Activated naive CD4-positive, alpha-beta T cell treated with anti-CD3 and anti-CD28 coated beads for 36 hours (primary cell): ENCODE measurements at regions of chr3 and their contacts with region 1.

Region 1: GRCh38 chr3:107271787-107272387 is 105.4 kb upstream of the CCDC54 start:
- DNase-seq: no peak
- H3K4me3 Mint-ChIP-seq: no peak overlapping the region
- H3K27ac Mint-ChIP-seq: no peak overlapping the region
- H3K4me1 Mint-ChIP-seq: no peaks in the 10 kb centered on the region
- H3K27me3 Mint-ChIP-seq: peaks cover 8% of the 10 kb centered on the region

Region 2: DNA sequence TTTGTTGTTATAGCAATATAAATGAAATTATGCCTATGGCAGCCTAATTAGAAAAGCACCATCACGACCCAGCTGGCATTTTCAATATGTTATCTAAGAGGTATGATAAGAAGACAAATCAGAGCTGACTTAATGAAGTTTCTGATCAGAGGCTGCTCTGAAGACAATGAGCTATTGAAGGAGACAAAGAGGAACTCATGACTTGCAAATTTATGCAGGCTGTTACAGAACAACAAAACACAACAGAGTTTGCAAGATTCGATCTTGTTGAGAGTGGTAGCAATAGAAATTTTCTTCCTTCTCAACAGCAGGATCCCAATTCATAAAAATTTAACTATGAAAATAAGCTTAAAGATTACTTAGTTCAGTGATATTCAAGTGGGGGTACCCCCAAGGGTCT is 113.0 kb after region 1 on chr3:
- CTCF ChIA-PET with region 1: no interaction called
- intact Hi-C with region 1: no loop called
- DNase-seq: no peak
- H3K4me3 Mint-ChIP-seq: no peak overlapping the region
- H3K27ac Mint-ChIP-seq: no peak overlapping the region
- H3K4me1 Mint-ChIP-seq: no peaks in the 10 kb centered on the region
- H3K27me3 Mint-ChIP-seq: peaks cover 6% of the 10 kb centered on the region

Region 3: DNA sequence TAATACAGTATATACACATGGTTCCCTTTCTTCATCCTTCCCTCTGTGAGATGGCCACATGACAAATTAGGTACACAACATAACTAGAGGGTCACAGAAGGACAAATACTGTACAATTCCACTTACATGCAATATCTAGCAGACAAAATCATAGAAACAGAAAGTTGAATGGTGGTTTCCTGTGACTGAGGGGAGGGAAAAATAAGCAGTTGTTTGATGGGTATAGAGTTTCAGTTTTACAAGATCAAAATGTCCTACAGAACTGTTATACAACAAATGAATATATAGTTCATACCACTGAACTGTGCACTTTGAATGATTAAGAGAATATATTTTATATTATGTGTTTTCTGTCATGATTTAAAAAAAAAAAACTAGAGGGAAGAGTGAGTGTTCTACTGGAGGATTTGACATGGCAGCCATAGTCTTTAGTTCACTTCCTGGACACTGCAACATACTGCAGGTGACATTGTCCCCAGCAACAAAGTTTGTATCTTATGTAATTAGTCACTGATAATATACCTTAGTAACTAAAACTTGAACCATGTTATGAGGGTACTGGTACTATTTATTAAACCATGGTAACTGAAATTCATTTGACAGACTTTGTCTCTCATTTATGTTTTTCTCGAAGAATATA is 142.6 kb after region 1 on chr3:
- CTCF ChIA-PET with region 1: interaction called, 10 read pairs
- intact Hi-C with region 1: no loop called
- DNase-seq: peak; percentile 14
- H3K4me3 Mint-ChIP-seq: no peak overlapping the region
- H3K27ac Mint-ChIP-seq: no peak overlapping the region
- H3K4me1 Mint-ChIP-seq: peaks cover 10% of the 10 kb centered on the region
- H3K27me3 Mint-ChIP-seq: no peaks in the 10 kb centered on the region

Region 4: DNA sequence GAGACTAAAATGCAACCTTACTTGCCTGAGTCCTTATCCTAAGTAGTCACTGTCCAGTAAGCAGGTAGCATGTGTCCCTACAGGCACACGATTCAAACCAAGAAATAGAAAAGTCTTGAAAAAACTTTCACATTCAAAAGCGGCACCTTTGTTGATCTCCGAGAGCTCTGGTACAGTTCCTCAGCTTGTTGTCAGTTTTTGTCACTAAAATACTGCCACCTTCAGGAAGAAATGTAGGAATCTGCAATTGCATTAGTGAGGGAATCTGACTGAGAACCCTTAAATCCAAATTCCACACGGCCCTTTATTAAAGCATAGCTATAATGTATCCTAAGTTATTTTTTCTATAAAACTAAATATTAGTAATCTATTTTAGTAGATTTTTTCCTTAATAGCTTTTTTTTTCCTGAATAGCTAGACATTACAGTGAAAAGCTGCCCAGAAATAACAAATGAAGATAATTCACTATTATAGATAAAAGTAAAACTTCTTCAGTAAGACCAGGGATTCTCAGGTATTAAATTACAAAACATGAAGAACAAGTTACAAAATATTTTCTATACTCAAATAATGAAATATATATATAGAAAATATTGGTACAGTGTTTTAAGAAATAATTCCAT is 149.4 kb after region 1 on chr3:
- CTCF ChIA-PET with region 1: interaction called, 27 read pairs
- intact Hi-C with region 1: loop called (anchors 1 kb)
- DNase-seq: peak; percentile 25
- H3K4me3 Mint-ChIP-seq: no peak overlapping the region
- H3K27ac Mint-ChIP-seq: no peak overlapping the region
- H3K4me1 Mint-ChIP-seq: peaks cover 3% of the 10 kb centered on the region
- H3K27me3 Mint-ChIP-seq: no peaks in the 10 kb centered on the region

Region 5: DNA sequence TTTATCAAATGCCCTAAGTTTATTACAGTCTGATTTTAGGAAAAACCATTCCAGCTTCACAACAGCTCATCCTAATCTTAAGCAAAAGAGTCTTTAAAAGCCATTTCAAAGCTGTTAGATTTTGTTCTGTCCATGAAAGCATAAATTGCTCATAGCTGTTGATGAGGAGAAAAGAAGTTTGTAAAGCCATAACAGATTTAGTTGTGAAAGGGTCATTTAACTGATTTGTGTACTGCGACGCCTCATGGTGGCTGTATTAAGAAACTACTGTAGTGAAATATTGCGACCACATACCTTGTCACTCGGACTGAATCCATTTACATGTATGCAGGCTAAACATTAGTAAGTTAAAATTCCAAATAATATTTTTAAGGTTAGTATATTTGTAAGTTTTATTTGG is 271.8 kb after region 1 on chr3:
- CTCF ChIA-PET with region 1: interaction called, 4 read pairs
- intact Hi-C with region 1: loop called (anchors 1 kb)
- DNase-seq: peak; percentile 13
- H3K4me3 Mint-ChIP-seq: no peak overlapping the region
- H3K27ac Mint-ChIP-seq: no peak overlapping the region
- H3K4me1 Mint-ChIP-seq: peaks cover 17% of the 10 kb centered on the region
- H3K27me3 Mint-ChIP-seq: no peaks in the 10 kb centered on the region

Region 6: GRCh38 chr3:107598926-107599771 is 327.3 kb after region 1 on chr3:
- CTCF ChIA-PET with region 1: interaction called, 5 read pairs
- intact Hi-C with region 1: loop called (anchors 1 kb)
- DNase-seq: peak; percentile 61
- H3K4me3 Mint-ChIP-seq: peak overlapping the region; percentile 79
- H3K27ac Mint-ChIP-seq: peak overlapping the region; percentile 85
- H3K4me1 Mint-ChIP-seq: peaks cover 50% of the 10 kb centered on the region
- H3K27me3 Mint-ChIP-seq: no peaks in the 10 kb centered on the region